ENCODE measurements at regions of chr20 and their contacts with region 1.

Region 1: DNA sequence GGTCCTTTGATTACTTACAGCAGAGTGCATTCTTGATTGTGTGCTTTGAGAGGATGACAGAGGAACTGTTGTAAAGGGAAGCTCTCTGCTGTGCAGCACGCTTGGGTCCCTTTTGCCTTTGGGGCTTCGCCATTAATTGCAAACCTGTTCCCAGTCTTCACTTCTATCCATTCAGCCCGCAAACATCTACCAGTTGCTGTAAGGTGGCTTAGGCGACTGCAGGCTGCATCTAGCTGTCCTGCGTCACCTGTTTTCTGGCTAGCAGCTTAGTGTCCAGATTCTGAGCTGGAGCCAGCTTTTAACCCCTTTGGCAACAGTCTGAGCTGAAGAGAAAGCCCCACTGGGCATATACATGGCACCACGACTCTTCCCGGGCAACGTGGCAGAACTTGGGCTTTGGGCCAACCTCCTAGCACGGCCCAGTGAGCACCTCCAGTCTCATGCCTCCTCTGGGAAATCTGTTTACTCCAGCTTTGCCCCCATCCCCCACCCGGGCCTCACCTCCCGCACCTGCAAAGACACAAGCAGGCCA is 2.5 kb upstream of the FASTKD5 start:
- DNase-seq: no peak
- ATAC-seq: no peak
- H3K4me3 Mint-ChIP-seq: no peak overlapping the region
- H3K27ac Mint-ChIP-seq: no peak overlapping the region
- H3K4me1 Mint-ChIP-seq: peaks cover 20% of the 10 kb centered on the region
- H3K27me3 Mint-ChIP-seq: peaks cover 2% of the 10 kb centered on the region

Region 2: DNA sequence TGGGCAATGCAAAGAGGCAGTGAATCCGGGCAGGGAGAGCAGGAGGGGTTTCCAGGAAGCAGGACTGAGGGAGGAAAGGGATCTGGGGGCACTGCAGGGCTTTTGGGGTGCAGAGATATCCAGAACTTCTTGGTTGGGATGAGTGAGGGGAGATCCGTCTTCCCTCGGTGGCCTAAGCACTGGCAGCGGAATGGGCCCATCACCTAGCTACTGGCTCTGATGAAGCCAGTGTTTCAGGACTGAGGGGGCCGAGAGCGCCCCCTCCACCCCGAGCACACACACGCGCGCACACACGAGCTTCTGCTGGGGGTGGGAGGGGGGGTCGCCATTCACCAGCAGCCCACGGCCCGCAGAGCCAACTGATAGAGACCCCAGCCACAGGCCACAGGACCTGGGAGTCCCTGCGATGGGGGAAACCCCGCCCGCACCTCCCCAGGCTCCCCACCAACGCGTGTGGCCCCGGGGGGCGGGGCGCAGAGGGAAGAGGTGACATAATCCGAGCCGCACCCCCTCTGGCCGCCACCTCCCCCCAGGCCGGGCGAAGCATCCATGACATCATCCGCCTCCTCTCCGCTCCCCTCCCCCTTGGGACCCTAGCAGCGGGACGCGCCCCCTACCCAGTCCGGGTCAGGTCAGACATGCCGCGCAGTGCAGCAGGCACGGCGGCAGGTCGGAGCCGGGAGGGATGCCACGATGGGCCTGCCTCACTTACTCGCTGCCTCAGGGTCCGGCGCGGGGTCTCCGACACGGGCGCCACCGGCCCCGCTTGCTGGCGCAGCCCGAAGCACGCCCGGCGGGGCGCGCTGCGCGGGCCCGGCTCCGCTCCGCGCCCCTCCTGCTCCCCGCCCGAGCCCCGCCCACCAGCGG is 10.8 kb after region 1 on chr20 and contains the start of gene LZTS3:
- CTCF ChIA-PET with region 1: interaction called, 10 read pairs
- POLR2A ChIA-PET with region 1: interaction called, 11 read pairs
- DNase-seq: peak; percentile 84
- ATAC-seq: peak; percentile 91
- H3K4me3 Mint-ChIP-seq: peak within 1 kb of the TSS; percentile 80
- H3K27ac Mint-ChIP-seq: peak within 1 kb of the TSS; percentile 63
- H3K4me1 Mint-ChIP-seq: peaks cover 15% of the 10 kb centered on the region
- H3K27me3 Mint-ChIP-seq: peaks cover 48% of the 10 kb centered on the region
- total RNA-seq, gene LZTS3: 0.42 to 0.53 TPM

Measured in activated CD8-positive, alpha-beta T cell treated with anti-CD3 and anti-CD28 coated beads, Interleukin-2, amount 10 ng/mL, durations not matched to agents 7 days and 5 days (primary cell).